ENCODE measurements at regions of chr15 and their contacts with region 1.

Region 1: DNA sequence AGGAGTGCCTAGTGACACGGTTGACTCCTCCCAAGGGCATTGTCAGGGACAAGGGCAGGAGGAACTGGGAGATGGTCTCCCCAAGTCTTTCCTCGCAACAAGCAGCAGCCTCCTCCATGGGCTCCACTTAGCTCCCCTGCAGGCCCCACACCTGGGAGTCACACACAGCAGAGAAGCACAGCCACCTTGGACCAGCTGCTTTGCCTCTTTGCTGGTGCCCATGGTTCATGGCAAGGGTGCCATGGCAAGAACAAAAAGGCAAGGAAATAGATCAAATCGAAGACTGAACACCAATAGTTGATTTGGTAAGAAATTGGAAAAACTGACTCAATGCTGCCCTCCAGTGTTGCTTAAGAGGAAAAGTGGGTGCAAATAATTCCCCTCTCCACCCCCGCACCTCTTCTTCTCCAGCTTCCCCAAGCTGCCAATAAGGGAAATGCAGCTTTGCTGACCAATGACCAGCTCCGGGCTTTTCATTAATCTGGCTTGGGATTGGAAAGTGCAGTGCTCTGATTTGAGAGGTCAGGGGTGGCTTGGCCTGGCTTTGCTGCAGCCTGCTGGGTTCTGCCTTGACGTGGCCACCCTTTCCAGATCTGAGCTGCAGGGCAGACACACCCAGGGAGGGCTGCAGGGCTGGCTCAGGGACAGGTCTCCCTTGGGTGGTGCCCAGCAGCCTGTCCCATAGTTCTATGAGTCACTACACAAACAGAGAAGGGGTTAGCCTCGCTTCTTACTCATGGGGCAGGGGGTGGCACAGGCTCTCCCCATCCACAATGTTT is 162.0 kb downstream of the KLF13 start:
- DNase-seq: peak in 1 of 2 donors; percentile 45
- H3K4me3 ChIP-seq: no peak overlapping the region
- H3K27ac ChIP-seq: peak overlapping the region in 1 of 2 donors; percentile 59
- H3K4me1 ChIP-seq: peaks cover 0 to 3% of the 10 kb centered on the region in 2 donors
- H3K27me3 ChIP-seq: no peaks in the 10 kb centered on the region
- CTCF ChIP-seq: peak; percentile 70 to 95 (median 93)
- POLR2A ChIP-seq: no peak

Region 2: DNA sequence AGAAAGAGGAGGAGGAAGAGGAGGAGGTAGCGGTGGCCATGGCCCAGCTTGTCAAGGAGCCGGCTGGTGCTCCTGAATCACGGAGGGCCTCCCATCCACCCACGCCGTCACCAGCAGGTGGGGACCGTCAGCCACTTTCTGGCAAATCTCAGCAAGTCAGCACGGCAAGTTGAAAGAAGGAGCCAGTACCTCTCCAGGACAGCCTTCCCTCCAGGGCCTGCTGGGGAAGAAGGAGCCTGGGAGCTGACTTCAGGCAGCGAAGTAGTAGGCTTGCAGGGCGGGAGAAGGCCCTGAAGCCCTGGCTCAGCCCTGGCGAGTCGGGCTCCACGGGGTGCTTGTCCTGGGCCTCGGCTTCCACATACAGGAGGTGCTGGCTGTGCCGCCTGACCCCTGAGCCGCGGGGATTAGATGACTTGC is 287.9 kb before region 1 on chr15:
- intact Hi-C with region 1: loop called (anchors 10 kb)
- DNase-seq: peak; percentile 36 to 67
- H3K4me3 ChIP-seq: no peak overlapping the region
- H3K27ac ChIP-seq: no peak overlapping the region
- H3K4me1 ChIP-seq: no peaks in the 10 kb centered on the region
- H3K27me3 ChIP-seq: no peaks in the 10 kb centered on the region
- CTCF ChIP-seq: peak; percentile 14 to 45 (median 40)
- POLR2A ChIP-seq: no peak

Region 3: GRCh38 chr15:31372635-31373091 is 116.0 kb before region 1 on chr15:
- intact Hi-C with region 1: loop called (anchors 10 kb)
- DNase-seq: no peak
- H3K4me3 ChIP-seq: peak overlapping the region in 1 of 3 donors; percentile 8
- H3K27ac ChIP-seq: peak overlapping the region in 1 of 2 donors; percentile 45
- H3K4me1 ChIP-seq: peaks cover 0 to 5% of the 10 kb centered on the region in 2 donors
- H3K27me3 ChIP-seq: no peaks in the 10 kb centered on the region
- CTCF ChIP-seq: no peak
- POLR2A ChIP-seq: no peak

Measured in breast epithelium (tissue), 4 donors.